ENCODE measurements at regions of chr18 and their contacts with region 1.

Region 1: GRCh38 chr18:63422087-63422809 is at the start of gene VPS4B:
- DNase-seq: peak; percentile 100
- H3K4me3 Mint-ChIP-seq: peak within 1 kb of the TSS; percentile 95
- H3K27ac Mint-ChIP-seq: peak within 1 kb of the TSS; percentile 97
- H3K4me1 Mint-ChIP-seq: peaks cover 33% of the 10 kb centered on the region
- H3K27me3 Mint-ChIP-seq: peaks cover 5% of the 10 kb centered on the region
- total RNA-seq, gene VPS4B: 41.7 to 43.3 TPM

Region 2: DNA sequence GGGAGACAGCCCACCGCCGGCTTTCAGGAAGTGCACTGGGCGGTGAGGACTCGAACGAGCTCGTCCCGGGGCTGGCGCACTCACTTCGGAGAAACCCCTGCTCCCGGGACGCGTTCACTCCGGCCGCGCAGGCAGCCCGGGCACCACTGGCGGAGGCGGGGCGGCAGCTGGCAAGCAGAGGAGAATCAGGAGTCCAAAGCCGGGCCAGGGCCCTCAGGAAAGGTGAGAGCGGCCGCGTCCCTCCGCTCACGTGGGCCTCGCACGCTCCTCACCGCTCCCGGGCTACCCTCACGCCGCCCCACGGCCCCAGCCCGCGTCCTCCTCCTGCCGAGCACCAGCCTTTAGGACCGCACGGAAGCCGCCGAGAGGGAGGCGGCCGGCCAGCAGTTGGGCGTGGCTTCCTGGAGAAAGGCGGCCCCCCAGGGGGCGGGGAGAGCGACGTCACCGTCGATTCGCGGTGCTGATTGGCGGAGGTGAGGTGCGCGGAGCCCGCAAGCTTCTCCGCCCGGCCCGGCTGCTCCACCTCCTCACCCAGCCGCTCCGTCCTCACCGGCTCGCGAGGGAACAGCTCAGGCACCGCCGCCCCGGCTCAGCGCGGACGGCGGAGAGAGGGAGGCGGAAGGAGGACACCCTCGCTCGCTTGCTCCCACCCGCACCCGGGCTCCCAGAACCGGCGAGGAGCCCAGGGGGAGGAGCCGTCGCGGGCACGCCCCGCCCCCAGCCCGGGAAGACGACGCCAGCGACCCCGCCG is 899.6 kb before region 1 on chr18 and contains the start of gene ZCCHC2:
- CTCF ChIA-PET with region 1: no interaction called
- POLR2A ChIA-PET with region 1: no interaction called
- intact Hi-C with region 1: loop called (anchors 2 kb)
- DNase-seq: peak; percentile 99
- H3K4me3 Mint-ChIP-seq: peak within 1 kb of the TSS; percentile 94
- H3K27ac Mint-ChIP-seq: peak within 1 kb of the TSS; percentile 94
- H3K4me1 Mint-ChIP-seq: peaks cover 16% of the 10 kb centered on the region
- H3K27me3 Mint-ChIP-seq: no peaks in the 10 kb centered on the region
- total RNA-seq, gene ZCCHC2: 24.9 to 27.5 TPM

Region 3: GRCh38 chr18:63216516-63217311 is 205.5 kb before region 1 on chr18:
- CTCF ChIA-PET with region 1: no interaction called
- POLR2A ChIA-PET with region 1: no interaction called
- intact Hi-C with region 1: loop called (anchors 5 kb)
- DNase-seq: peak; percentile 50
- H3K4me3 Mint-ChIP-seq: peak overlapping the region; percentile 64
- H3K27ac Mint-ChIP-seq: peak overlapping the region; percentile 93
- H3K4me1 Mint-ChIP-seq: peaks cover 95% of the 10 kb centered on the region
- H3K27me3 Mint-ChIP-seq: no peaks in the 10 kb centered on the region

Region 4: GRCh38 chr18:63378919-63379638 is 43.2 kb before region 1 on chr18:
- CTCF ChIA-PET with region 1: no interaction called
- POLR2A ChIA-PET with region 1: no interaction called
- intact Hi-C with region 1: loop called (anchors 1 kb)
- DNase-seq: no peak
- H3K4me3 Mint-ChIP-seq: peak overlapping the region; percentile 23
- H3K27ac Mint-ChIP-seq: no peak overlapping the region
- H3K4me1 Mint-ChIP-seq: peaks cover 21% of the 10 kb centered on the region
- H3K27me3 Mint-ChIP-seq: no peaks in the 10 kb centered on the region

Region 5: GRCh38 chr18:63410792-63411191 is 11.5 kb before region 1 on chr18:
- CTCF ChIA-PET with region 1: interaction called, 4 read pairs
- POLR2A ChIA-PET with region 1: interaction called, 6 read pairs
- intact Hi-C with region 1: loop called (anchors 1 kb)
- DNase-seq: no peak
- H3K4me3 Mint-ChIP-seq: no peak overlapping the region
- H3K27ac Mint-ChIP-seq: peak overlapping the region; percentile 15
- H3K4me1 Mint-ChIP-seq: peaks cover 46% of the 10 kb centered on the region
- H3K27me3 Mint-ChIP-seq: no peaks in the 10 kb centered on the region

Region 6: GRCh38 chr18:63578357-63578958 is 156.2 kb after region 1 on chr18:
- CTCF ChIA-PET with region 1: no interaction called
- POLR2A ChIA-PET with region 1: no interaction called
- intact Hi-C with region 1: no loop called
- DNase-seq: no peak
- H3K4me3 Mint-ChIP-seq: no peak overlapping the region
- H3K27ac Mint-ChIP-seq: no peak overlapping the region
- H3K4me1 Mint-ChIP-seq: no peaks in the 10 kb centered on the region
- H3K27me3 Mint-ChIP-seq: peaks cover 3% of the 10 kb centered on the region

Region 7: GRCh38 chr18:63949068-63949737 is 527.0 kb after region 1 on chr18 and contains the start of gene HMSD:
- CTCF ChIA-PET with region 1: no interaction called
- POLR2A ChIA-PET with region 1: no interaction called
- intact Hi-C with region 1: loop called (anchors 5 kb)
- DNase-seq: peak; percentile 88
- H3K4me3 Mint-ChIP-seq: peak within 1 kb of the TSS; percentile 85
- H3K27ac Mint-ChIP-seq: peak within 1 kb of the TSS; percentile 86
- H3K4me1 Mint-ChIP-seq: peaks cover 45% of the 10 kb centered on the region
- H3K27me3 Mint-ChIP-seq: peaks cover 13% of the 10 kb centered on the region
- total RNA-seq, gene HMSD: 18.9 to 19.5 TPM

Measured in activated CD4-positive, alpha-beta memory T cell treated with anti-CD3 and anti-CD28 coated beads for 36 hours (primary cell).